Panc1 (cell line): ENCODE measurements at regions of chr1 and their contacts with region 1.

Region 1: GRCh38 chr1:147741065-147741464 is 19.3 kb downstream of the GJA5 start:
- DNase-seq: no peak
- ATAC-seq: no peak
- H3K4me3 ChIP-seq: no peak overlapping the region
- H3K27ac ChIP-seq: no peak overlapping the region
- H3K4me1 ChIP-seq: no peaks in the 10 kb centered on the region
- H3K27me3 ChIP-seq: peaks cover 3% of the 10 kb centered on the region; the same call in 1 of the 2 replicates
- CTCF ChIP-seq: no peak

Region 2: DNA sequence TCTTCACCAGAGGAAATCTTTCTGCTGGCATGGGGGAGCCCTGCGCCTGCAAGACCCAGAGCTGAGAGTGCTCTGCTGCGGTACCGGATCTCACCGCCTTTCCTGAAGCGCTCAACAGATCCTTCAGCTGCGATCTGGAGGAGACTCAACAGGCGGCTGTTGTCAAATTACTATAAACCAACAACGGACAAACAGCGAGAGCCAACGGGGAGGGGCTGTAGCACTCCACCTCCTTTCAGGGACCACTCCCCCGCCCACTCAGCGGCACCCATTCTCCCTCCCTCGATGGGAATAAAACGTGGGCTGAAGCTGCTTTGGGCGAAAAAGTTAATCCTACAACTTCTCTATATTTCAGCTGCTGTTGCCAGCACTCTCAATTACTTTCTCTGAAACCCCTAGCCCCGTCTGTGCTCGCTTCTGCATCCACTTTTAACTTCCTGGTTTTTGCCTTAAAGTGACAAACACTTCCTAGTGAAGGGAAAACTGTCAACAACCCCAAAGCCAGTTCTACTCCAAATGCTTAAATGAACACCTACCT is 515.8 kb before region 1 on chr1 and contains the start of gene FMO5:
- CTCF ChIA-PET with region 1: no interaction called
- POLR2A ChIA-PET with region 1: no interaction called
- in situ Hi-C with region 1: no loop called
- intact Hi-C with region 1: no loop called
- DNase-seq: no peak
- ATAC-seq: peak; percentile 96
- H3K4me3 ChIP-seq: peak within 1 kb of the TSS; percentile 64 to 91
- H3K27ac ChIP-seq: peak within 1 kb of the TSS; percentile 59; the same call in 1 of the 2 replicates
- H3K4me1 ChIP-seq: no peaks in the 10 kb centered on the region
- H3K27me3 ChIP-seq: peaks cover 8% of the 10 kb centered on the region; the same call in 1 of the 2 replicates
- CTCF ChIP-seq: no peak
- total RNA-seq, gene FMO5: 0.57 TPM

Region 3: GRCh38 chr1:147821883-147822282 is 80.8 kb after region 1 on chr1:
- CTCF ChIA-PET with region 1: interaction called, 10 read pairs
- POLR2A ChIA-PET with region 1: no interaction called
- in situ Hi-C with region 1: no loop called
- intact Hi-C with region 1: no loop called
- DNase-seq: no peak
- ATAC-seq: no peak
- H3K4me3 ChIP-seq: no peak overlapping the region
- H3K27ac ChIP-seq: no peak overlapping the region
- H3K4me1 ChIP-seq: no peaks in the 10 kb centered on the region
- H3K27me3 ChIP-seq: peaks cover 3% of the 10 kb centered on the region
- CTCF ChIP-seq: no peak